Activated T-helper 1 cell treated with anti-CD3 and anti-CD28 coated beads, Interleukin-12 subunit alpha, Interleukin-12 subunit beta, Interleukin-2, Interleukin-4 antibody, amounts not matched to agents 30 ng/mL and 10 ng/mL and 1 ng/mL, durations not matched to agents 14 hours and 24 hours and 36 hours (primary cell): ENCODE measurements at regions of chr10 and their contacts with region 1.

Region 1: GRCh38 chr10:35341521-35341920 is 5.2 kb downstream of the CCNY start:
- DNase-seq: no peak
- H3K4me3 Mint-ChIP-seq: peak overlapping the region; percentile 25
- H3K27ac Mint-ChIP-seq: peak overlapping the region; percentile 64
- H3K4me1 Mint-ChIP-seq: peaks cover 72% of the 10 kb centered on the region
- H3K27me3 Mint-ChIP-seq: no peaks in the 10 kb centered on the region

Region 2: DNA sequence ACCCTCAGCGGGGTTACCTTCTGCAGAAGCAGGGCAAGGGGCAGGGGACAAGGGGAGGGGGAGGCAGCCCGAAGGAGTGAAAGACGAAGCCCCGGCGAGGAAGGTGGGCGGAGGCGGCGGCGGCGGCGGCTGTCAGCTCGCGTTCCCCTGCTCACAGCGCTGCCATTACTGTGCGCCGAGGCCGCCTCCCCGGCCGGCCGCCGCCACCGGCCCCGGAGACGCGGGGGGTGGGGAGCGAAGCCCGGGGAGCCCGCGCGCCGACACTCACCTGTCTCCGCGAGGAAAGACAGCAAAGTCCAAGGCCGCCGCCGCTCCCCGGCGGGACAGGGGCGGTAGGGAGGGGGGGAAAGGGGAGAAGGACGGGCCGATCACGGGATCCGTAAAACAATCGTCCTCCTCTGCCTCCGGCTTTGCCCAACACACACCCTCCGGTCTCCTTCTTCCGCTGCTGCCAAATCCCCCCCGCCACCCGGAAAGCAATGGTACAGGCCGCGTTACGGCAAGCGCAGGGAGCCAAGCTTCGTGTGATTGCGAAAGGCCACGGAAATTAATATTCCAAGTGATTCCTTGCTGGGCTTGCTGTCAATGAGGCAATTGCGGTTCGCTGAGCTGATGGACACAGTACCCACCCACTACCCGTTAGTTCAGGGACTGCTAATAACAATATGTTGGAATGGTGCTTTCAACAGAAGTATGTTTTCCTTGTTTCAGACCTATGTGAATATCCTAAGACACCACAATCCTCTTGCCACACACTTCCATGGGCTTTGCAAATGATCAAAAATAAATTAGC is 251.2 kb before region 1 on chr10 and contains the start of gene CUL2:
- intact Hi-C with region 1: loop called (anchors 1 kb)
- DNase-seq: peak; percentile 90
- H3K4me3 Mint-ChIP-seq: peak within 1 kb of the TSS; percentile 98
- H3K27ac Mint-ChIP-seq: peak within 1 kb of the TSS; percentile 99
- H3K4me1 Mint-ChIP-seq: peaks cover 38% of the 10 kb centered on the region
- H3K27me3 Mint-ChIP-seq: peaks cover 9% of the 10 kb centered on the region
- total RNA-seq, gene CUL2: 49.8 and 50.5 TPM in 2 replicates

Region 3: GRCh38 chr10:35324196-35324595 is 17.3 kb before region 1 on chr10:
- intact Hi-C with region 1: no loop called
- DNase-seq: no peak
- H3K4me3 Mint-ChIP-seq: no peak overlapping the region
- H3K27ac Mint-ChIP-seq: no peak overlapping the region
- H3K4me1 Mint-ChIP-seq: peaks cover 13% of the 10 kb centered on the region
- H3K27me3 Mint-ChIP-seq: no peaks in the 10 kb centered on the region

Region 4: DNA sequence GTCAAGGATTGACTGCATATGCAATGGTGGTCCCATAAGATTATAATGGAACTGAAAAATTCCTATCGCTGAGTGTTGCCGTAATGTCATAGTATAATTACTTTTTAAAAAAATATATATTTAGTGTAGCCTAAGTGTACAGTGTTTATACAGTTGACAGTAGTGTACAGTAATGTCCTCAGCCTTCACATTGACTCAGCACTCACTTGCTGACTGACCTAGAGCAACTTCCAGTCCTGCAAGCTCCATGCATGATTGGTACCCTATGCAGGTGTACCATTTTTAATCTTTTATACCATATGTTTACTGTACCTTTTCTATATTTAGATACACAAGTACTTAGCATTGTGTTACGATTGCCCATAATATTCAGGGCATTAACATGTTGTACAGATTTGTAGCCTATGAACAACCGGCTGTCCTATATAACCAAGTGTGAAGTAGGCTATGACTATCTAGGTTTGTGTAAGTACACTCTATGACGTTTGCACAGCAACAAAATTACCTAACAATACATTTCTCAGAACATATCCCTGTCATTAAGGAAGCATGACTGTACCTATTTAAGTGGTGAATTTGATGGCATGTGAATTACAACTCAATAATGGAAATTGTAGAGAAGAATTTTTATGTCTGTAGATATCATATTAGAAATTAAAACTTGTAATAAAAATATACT is 35.7 kb after region 1 on chr10:
- intact Hi-C with region 1: loop called (anchors 1 kb)
- DNase-seq: no peak
- H3K4me3 Mint-ChIP-seq: no peak overlapping the region
- H3K27ac Mint-ChIP-seq: no peak overlapping the region
- H3K4me1 Mint-ChIP-seq: peaks cover 62% of the 10 kb centered on the region
- H3K27me3 Mint-ChIP-seq: no peaks in the 10 kb centered on the region

Region 5: GRCh38 chr10:35433851-35434426 is 92.4 kb after region 1 on chr10:
- intact Hi-C with region 1: loop called (anchors 1 kb)
- DNase-seq: no peak
- H3K4me3 Mint-ChIP-seq: no peak overlapping the region
- H3K27ac Mint-ChIP-seq: peak overlapping the region; percentile 31
- H3K4me1 Mint-ChIP-seq: peaks cover 22% of the 10 kb centered on the region
- H3K27me3 Mint-ChIP-seq: no peaks in the 10 kb centered on the region